Ovary (tissue), 10 donors: ENCODE measurements at regions of chr9 and their contacts with region 1.

Region 1: DNA sequence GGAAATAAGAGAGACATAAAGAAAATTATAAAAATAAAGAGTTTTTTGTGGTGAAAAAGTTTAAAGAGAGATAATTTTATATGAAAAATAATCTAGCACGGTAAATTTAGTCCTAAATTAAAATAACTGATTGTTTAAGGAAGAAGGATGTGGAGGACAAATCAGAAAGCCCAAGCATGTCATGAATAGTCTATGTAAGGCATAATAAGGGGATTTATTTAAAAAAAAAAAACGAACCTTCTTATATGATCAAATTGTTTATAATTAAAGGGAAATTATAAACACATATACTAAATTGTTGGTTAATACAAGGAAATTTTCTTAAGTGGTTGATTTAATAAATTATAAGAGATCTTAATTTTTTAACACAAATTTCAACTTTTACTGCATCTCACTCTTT is 551.8 kb upstream of the TYRP1 start:
- DNase-seq: no peak
- H3K4me3 ChIP-seq: no peak overlapping the region
- H3K27ac ChIP-seq: no peak overlapping the region
- H3K4me1 ChIP-seq: no peaks in the 10 kb centered on the region
- H3K27me3 ChIP-seq: no peaks in the 10 kb centered on the region
- CTCF ChIP-seq: no peak
- EP300 ChIP-seq: no peak
- POLR2A ChIP-seq: no peak

Region 2: GRCh38 chr9:11735391-11735790 is 406.0 kb before region 1 on chr9:
- intact Hi-C with region 1: loop called in 1 of 4 experiments (anchors 10 kb)
- DNase-seq: no peak
- H3K4me3 ChIP-seq: no peak overlapping the region
- H3K27ac ChIP-seq: no peak overlapping the region
- H3K4me1 ChIP-seq: no peaks in the 10 kb centered on the region
- H3K27me3 ChIP-seq: no peaks in the 10 kb centered on the region
- CTCF ChIP-seq: no peak
- EP300 ChIP-seq: no peak
- POLR2A ChIP-seq: no peak

Region 3: GRCh38 chr9:11779971-11780370 is 361.5 kb before region 1 on chr9:
- intact Hi-C with region 1: no loop called
- DNase-seq: no peak
- H3K4me3 ChIP-seq: no peak overlapping the region
- H3K27ac ChIP-seq: no peak overlapping the region
- H3K4me1 ChIP-seq: no peaks in the 10 kb centered on the region
- H3K27me3 ChIP-seq: no peaks in the 10 kb centered on the region
- CTCF ChIP-seq: no peak
- EP300 ChIP-seq: no peak
- POLR2A ChIP-seq: no peak

Region 4: GRCh38 chr9:12212860-12213259 is 71.4 kb after region 1 on chr9:
- intact Hi-C with region 1: no loop called
- DNase-seq: no peak
- H3K4me3 ChIP-seq: no peak overlapping the region
- H3K27ac ChIP-seq: no peak overlapping the region
- H3K4me1 ChIP-seq: no peaks in the 10 kb centered on the region
- H3K27me3 ChIP-seq: no peaks in the 10 kb centered on the region
- CTCF ChIP-seq: no peak
- EP300 ChIP-seq: no peak
- POLR2A ChIP-seq: no peak

Region 5: GRCh38 chr9:12290166-12290869 is 148.9 kb after region 1 on chr9:
- intact Hi-C with region 1: no loop called
- DNase-seq: no peak
- H3K4me3 ChIP-seq: no peak overlapping the region
- H3K27ac ChIP-seq: no peak overlapping the region
- H3K4me1 ChIP-seq: no peaks in the 10 kb centered on the region
- H3K27me3 ChIP-seq: no peaks in the 10 kb centered on the region
- CTCF ChIP-seq: no peak
- EP300 ChIP-seq: no peak
- POLR2A ChIP-seq: no peak